GM12878 (cell line): ENCODE measurements at regions of chr6 and their contacts with region 1.

Region 1: GRCh38 chr6:52664186-52664990 is 6.5 kb upstream of the TMEM14A start:
- DNase-seq: peak; percentile 83
- ATAC-seq: peak; percentile 94
- H3K4me3 ChIP-seq: peak overlapping the region; percentile 73
- H3K27ac ChIP-seq: peak overlapping the region; percentile 30
- H3K4me1 ChIP-seq: peaks cover 24% of the 10 kb centered on the region
- H3K27me3 ChIP-seq: no peaks in the 10 kb centered on the region
- CTCF ChIP-seq: no peak
- EP300 ChIP-seq: no peak
- POLR2A ChIP-seq: peak; percentile 95
- RAD21 ChIP-seq: no peak

Region 2: DNA sequence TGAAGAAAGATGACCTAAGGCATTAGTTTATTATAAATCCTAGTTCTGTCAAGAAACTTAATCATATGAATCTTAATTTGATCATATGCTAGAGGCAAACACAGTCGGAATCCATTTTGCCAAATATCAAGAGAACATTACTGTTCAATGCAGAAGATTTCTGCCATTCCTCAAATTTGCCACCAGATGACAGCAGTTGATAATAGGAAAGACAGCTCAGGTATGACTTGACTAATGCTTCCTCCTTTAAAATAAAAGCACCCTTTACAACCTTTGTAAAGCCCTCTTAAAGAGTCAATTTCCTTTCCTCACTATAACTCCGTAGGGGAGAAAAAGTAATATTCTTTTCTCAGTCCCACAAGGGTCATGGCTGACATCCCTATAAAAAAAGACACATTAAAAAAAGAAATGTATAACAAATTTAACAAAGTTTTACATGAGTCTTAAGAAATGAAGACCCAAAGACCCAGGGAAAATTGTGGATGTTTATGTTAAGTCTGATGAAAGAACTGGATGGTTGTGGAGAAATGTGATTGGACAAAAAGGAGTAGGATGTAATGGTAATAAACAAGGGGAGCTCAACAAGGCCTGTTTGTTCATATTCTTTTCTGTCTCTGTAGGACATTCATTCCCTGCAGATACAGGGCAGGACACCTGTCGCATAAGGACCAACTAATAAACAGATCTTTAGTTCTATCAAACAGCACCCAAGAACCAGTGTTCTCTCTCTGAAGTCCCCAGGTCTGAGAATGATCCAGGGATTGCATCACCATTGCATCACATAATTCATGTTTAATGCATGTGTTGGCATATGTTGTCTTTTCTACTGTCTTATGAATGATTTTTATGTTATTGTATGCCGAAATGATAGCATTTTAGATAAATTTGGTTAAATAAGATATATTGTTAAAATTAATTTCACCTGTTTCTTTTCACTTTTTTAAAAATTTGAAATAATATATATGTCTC is 501.2 kb before region 1 on chr6:
- CTCF ChIA-PET with region 1: interaction called, 6 read pairs
- POLR2A ChIA-PET with region 1: no interaction called
- RAD21 ChIA-PET with region 1: interaction called, 8 read pairs
- SMC1A ChIA-PET with region 1: interaction called, 6 read pairs
- in situ Hi-C with region 1: loop called (anchors 10 kb)
- intact Hi-C with region 1: loop called (anchors 5 kb)
- DNase-seq: no peak
- ATAC-seq: peak; percentile 92
- H3K4me3 ChIP-seq: no peak overlapping the region
- H3K27ac ChIP-seq: no peak overlapping the region
- H3K4me1 ChIP-seq: peaks cover 9% of the 10 kb centered on the region; the same call in 1 of the 2 replicates
- H3K27me3 ChIP-seq: no peaks in the 10 kb centered on the region
- CTCF ChIP-seq: peak; percentile 84 to 95 (median 91)
- EP300 ChIP-seq: no peak
- POLR2A ChIP-seq: no peak
- RAD21 ChIP-seq: peak; percentile 100

Region 3: GRCh38 chr6:52399511-52400312 is 264.7 kb before region 1 on chr6:
- CTCF ChIA-PET with region 1: interaction called, 17 read pairs
- POLR2A ChIA-PET with region 1: interaction called, 4 read pairs
- RAD21 ChIA-PET with region 1: no interaction called
- SMC1A ChIA-PET with region 1: interaction called, 12 read pairs
- in situ Hi-C with region 1: no loop called
- intact Hi-C with region 1: no loop called
- DNase-seq: no peak
- ATAC-seq: peak; percentile 50
- H3K4me3 ChIP-seq: no peak overlapping the region
- H3K27ac ChIP-seq: no peak overlapping the region
- H3K4me1 ChIP-seq: peaks cover 37% of the 10 kb centered on the region
- H3K27me3 ChIP-seq: no peaks in the 10 kb centered on the region
- CTCF ChIP-seq: peak; percentile 84 to 93 (median 90); a peak in 5 of 6 replicates
- EP300 ChIP-seq: no peak
- POLR2A ChIP-seq: no peak
- RAD21 ChIP-seq: peak; percentile 98

Region 4: DNA sequence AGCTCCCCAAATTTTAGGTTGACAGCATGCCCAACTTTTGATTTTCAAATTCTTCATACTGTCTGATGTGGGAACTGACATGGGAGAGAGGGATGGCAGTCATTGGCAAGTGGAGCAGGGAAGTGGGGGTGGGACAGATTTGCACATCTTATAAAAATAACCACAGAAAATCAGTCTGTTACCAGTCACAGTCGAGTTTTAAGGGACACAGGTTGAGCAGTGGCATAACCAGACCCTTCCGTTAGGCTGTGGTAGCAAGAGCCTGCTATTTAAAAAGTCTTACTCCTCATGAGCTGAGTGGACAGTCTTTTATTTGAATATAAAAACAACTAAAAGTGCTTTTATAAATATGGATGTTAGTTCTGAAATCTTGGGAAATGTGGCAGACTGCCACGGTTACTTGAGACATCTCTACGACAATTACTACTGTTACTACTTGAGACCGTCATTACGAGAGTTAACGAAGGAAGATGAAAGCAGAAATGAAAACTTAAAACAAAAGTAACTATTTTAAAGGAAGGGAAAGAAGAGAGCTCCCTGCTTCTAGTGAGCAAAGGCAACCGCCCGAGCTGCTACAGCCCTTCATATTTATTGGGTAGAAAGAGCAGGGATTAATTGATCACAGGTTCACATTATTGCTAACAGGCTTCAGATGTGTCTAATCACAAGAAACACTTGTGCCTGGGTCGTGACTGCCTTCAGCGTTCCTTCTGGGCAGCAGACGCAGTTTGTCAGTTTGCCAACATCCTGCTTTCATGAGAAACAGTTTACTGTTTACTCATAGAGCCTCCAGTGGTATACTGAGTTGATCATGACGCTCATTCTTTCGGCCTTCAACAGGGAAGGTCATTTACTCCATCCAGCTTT is 173.0 kb before region 1 on chr6:
- CTCF ChIA-PET with region 1: interaction called, 21 read pairs
- POLR2A ChIA-PET with region 1: interaction called, 3 read pairs
- RAD21 ChIA-PET with region 1: interaction called, 23 read pairs
- SMC1A ChIA-PET with region 1: interaction called, 6 read pairs
- in situ Hi-C with region 1: loop called (anchors 5 kb)
- intact Hi-C with region 1: loop called (anchors 2 kb)
- DNase-seq: peak; percentile 58
- ATAC-seq: peak; percentile 74
- H3K4me3 ChIP-seq: peak overlapping the region; percentile 50; the same call in 1 of the 2 replicates
- H3K27ac ChIP-seq: peak overlapping the region; percentile 89
- H3K4me1 ChIP-seq: peaks cover 56% of the 10 kb centered on the region
- H3K27me3 ChIP-seq: no peaks in the 10 kb centered on the region
- CTCF ChIP-seq: no peak
- EP300 ChIP-seq: no peak; a peak in 1 of 4 replicates
- POLR2A ChIP-seq: no peak
- RAD21 ChIP-seq: no peak

Region 5: DNA sequence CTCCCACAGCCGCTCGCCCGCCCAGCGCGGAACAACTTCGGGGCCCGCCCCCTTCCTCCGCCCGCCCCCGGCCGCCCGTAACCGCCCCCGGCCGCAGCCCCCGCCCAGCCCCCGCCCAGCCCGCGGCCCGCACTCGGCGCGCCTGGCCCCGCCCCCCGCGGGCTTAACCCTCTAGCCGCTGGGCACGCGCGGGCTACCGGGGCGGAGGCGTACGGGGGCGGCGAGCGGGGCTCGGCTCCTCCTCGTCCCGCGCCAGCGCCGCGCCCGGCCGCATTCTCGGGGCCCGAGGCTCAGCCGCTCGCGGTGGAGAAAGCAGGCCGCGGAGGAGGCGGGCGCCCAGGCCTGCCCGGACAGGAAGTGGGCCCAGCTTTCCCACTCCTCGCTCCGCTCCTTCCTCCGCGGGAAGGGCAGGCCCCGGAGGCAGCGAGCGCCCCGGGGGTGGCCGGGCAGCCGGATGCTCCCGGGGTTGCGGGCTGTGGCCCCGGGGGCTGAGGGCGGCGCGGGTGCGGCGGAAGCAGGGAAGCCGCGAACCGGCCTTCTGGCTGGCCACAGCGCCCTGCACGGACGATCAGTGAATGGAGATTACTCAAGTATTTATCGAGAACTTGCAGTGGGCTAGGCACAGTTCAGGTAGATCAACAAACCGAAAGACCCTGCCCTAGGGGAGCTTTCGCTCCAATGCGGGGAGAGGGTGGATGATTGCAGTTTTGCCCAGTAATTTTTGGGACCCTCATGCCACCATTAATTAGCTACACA is 87.2 kb before region 1 on chr6 and contains the start of gene TRAM2:
- CTCF ChIA-PET with region 1: interaction called, 15 read pairs
- POLR2A ChIA-PET with region 1: no interaction called
- RAD21 ChIA-PET with region 1: interaction called, 6 read pairs
- SMC1A ChIA-PET with region 1: interaction called, 8 read pairs
- in situ Hi-C with region 1: no loop called
- intact Hi-C with region 1: loop called (anchors 1 kb)
- DNase-seq: no peak
- ATAC-seq: peak; percentile 73
- H3K4me3 ChIP-seq: peak within 1 kb of the TSS; percentile 81
- H3K27ac ChIP-seq: peak within 1 kb of the TSS; percentile 86
- H3K4me1 ChIP-seq: peaks cover 30% of the 10 kb centered on the region
- H3K27me3 ChIP-seq: no peaks in the 10 kb centered on the region
- CTCF ChIP-seq: no peak
- EP300 ChIP-seq: no peak
- POLR2A ChIP-seq: peak; percentile 83
- RAD21 ChIP-seq: no peak
- polyA plus RNA-seq, gene TRAM2: 2.5 TPM

Region 6: GRCh38 chr6:52650941-52651340 is 13.4 kb before region 1 on chr6:
- CTCF ChIA-PET with region 1: interaction called, 99 read pairs
- POLR2A ChIA-PET with region 1: interaction called, 4 read pairs
- RAD21 ChIA-PET with region 1: interaction called, 31 read pairs
- SMC1A ChIA-PET with region 1: interaction called, 66 read pairs
- in situ Hi-C with region 1: no loop called
- intact Hi-C with region 1: no loop called
- DNase-seq: no peak
- ATAC-seq: no peak
- H3K4me3 ChIP-seq: no peak overlapping the region
- H3K27ac ChIP-seq: no peak overlapping the region
- H3K4me1 ChIP-seq: no peaks in the 10 kb centered on the region
- H3K27me3 ChIP-seq: no peaks in the 10 kb centered on the region; a peak in 1 of 4 replicates
- CTCF ChIP-seq: no peak
- EP300 ChIP-seq: no peak
- POLR2A ChIP-seq: no peak
- RAD21 ChIP-seq: no peak